Dorsolateral prefrontal cortex (tissue), 120 donors: ENCODE measurements at regions of chr17 and their contacts with region 1.

Region 1: GRCh38 chr17:49567871-49568694 is 7.6 kb upstream of the NXPH3 start:
- DNase-seq: peak; percentile 76 to 91 (median 88)
- H3K4me3 ChIP-seq: peak overlapping the region; percentile 34 to 78 (median 57)
- H3K27ac ChIP-seq: peak overlapping the region in 44 of 59 donors; percentile 5 to 95 (median 68)
- H3K27me3 ChIP-seq: no peaks in the 10 kb centered on the region
- CTCF ChIP-seq: peak; percentile 86 to 99 (median 96)

Region 2: GRCh38 chr17:49515196-49515770 is 52.8 kb before region 1 on chr17:
- intact Hi-C with region 1: no loop called
- DNase-seq: peak in 9 of 10 donors; percentile 42 to 93 (median 70)
- H3K4me3 ChIP-seq: peak overlapping the region in 2 of 59 donors; percentile 4 to 22
- H3K27ac ChIP-seq: peak overlapping the region in 57 of 59 donors; percentile 12 to 88 (median 77)
- H3K27me3 ChIP-seq: peaks cover 0 to 4% (median 0%) of the 10 kb centered on the region in 45 donors
- CTCF ChIP-seq: peak in 18 of 56 donors; percentile 10 to 34 (median 18)

Region 3: GRCh38 chr17:49694847-49695683 is 127.0 kb after region 1 on chr17:
- intact Hi-C with region 1: loop called (anchors 2 kb)
- DNase-seq: peak in 7 of 10 donors; percentile 52 to 73 (median 59)
- H3K4me3 ChIP-seq: peak overlapping the region in 43 of 59 donors; percentile 1 to 56 (median 28)
- H3K27ac ChIP-seq: peak overlapping the region in 6 of 59 donors; percentile 1 to 74 (median 32)
- H3K27me3 ChIP-seq: no peaks in the 10 kb centered on the region
- CTCF ChIP-seq: peak; percentile 76 to 98 (median 93)

Region 4: DNA sequence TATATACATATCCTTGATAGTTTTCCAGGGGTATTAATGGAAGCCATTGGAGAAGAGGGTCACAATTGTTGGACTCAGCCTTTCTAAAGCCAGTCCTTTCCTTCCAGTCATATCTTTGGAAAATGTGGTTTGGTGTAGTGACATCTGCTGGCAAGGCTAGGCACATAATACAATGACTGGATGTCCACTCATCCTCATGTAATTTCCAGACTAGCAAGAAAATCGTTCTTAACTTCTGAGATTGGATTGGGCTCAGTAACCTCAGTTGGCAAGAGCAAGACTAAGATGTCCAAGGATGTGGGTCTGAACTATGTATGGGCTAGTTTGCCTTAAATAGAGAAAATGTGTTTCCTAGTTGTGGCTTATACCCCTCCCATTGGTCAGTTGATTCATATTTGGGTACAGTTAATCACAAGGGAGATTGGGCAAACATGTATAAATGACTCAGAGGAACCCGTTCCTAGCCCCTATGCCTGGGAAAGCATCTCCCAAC is 211.7 kb after region 1 on chr17:
- intact Hi-C with region 1: loop called (anchors 5 kb)
- DNase-seq: peak in 2 of 10 donors; percentile 25 to 36
- H3K4me3 ChIP-seq: no peak overlapping the region
- H3K27ac ChIP-seq: no peak overlapping the region
- H3K27me3 ChIP-seq: no peaks in the 10 kb centered on the region
- CTCF ChIP-seq: peak in 54 of 56 donors; percentile 20 to 67 (median 47)